ENCODE measurements at regions of chr16 and their contacts with region 1.

Region 1: GRCh38 chr16:75622761-75623605 is at the start of gene ADAT1:
- DNase-seq: peak; percentile 95 to 99
- ATAC-seq: peak; percentile 95 to 98 (median 95)
- H3K4me3 ChIP-seq: peak within 1 kb of the TSS; percentile 90
- H3K4me3 Mint-ChIP-seq: peak within 1 kb of the TSS; percentile 91
- H3K27ac ChIP-seq: peak within 1 kb of the TSS; percentile 93
- H3K27ac Mint-ChIP-seq: peak within 1 kb of the TSS; percentile 93 to 98
- H3K4me1 ChIP-seq: peaks cover 35% of the 10 kb centered on the region
- H3K4me1 Mint-ChIP-seq: peaks cover 41 to 42% of the 10 kb centered on the region in 2 donors
- H3K27me3 ChIP-seq: no peaks in the 10 kb centered on the region
- H3K27me3 Mint-ChIP-seq: no peaks in the 10 kb centered on the region
- CTCF ChIP-seq: no peak
- total RNA-seq, gene ADAT1: 63.5 to 65.2 (median 64.8) TPM

Region 2: GRCh38 chr16:75432828-75433731 is 189.9 kb before region 1 on chr16 and contains the start of gene CFDP1:
- intact Hi-C with region 1: loop called (anchors 1 kb)
- DNase-seq: peak; percentile 93 to 98
- ATAC-seq: peak; percentile 83 to 93 (median 87)
- H3K4me3 ChIP-seq: peak within 1 kb of the TSS; percentile 86
- H3K4me3 Mint-ChIP-seq: peak within 1 kb of the TSS; percentile 96
- H3K27ac ChIP-seq: peak within 1 kb of the TSS; percentile 94
- H3K27ac Mint-ChIP-seq: peak within 1 kb of the TSS; percentile 96 to 99
- H3K4me1 ChIP-seq: peaks cover 19% of the 10 kb centered on the region
- H3K4me1 Mint-ChIP-seq: peaks cover 22 to 26% of the 10 kb centered on the region in 2 donors
- H3K27me3 ChIP-seq: no peaks in the 10 kb centered on the region
- H3K27me3 Mint-ChIP-seq: no peaks in the 10 kb centered on the region
- CTCF ChIP-seq: no peak
- total RNA-seq, gene CFDP1: 32.2 to 38.8 (median 32.3) TPM

Region 3: GRCh38 chr16:75464130-75464918 is 158.7 kb before region 1 on chr16 and contains the start of gene TMEM170A:
- intact Hi-C with region 1: loop called (anchors 5 kb)
- DNase-seq: peak; percentile 98 to 99
- ATAC-seq: peak; percentile 89 to 97 (median 91)
- H3K4me3 ChIP-seq: peak within 1 kb of the TSS; percentile 82
- H3K4me3 Mint-ChIP-seq: peak within 1 kb of the TSS; percentile 97
- H3K27ac ChIP-seq: peak within 1 kb of the TSS; percentile 99
- H3K27ac Mint-ChIP-seq: peak within 1 kb of the TSS; percentile 95 to 97
- H3K4me1 ChIP-seq: peaks cover 13% of the 10 kb centered on the region
- H3K4me1 Mint-ChIP-seq: peaks cover 46 to 52% of the 10 kb centered on the region in 2 donors
- H3K27me3 ChIP-seq: no peaks in the 10 kb centered on the region
- H3K27me3 Mint-ChIP-seq: no peaks in the 10 kb centered on the region
- CTCF ChIP-seq: no peak
- total RNA-seq, gene TMEM170A: 51.5 to 61.0 (median 53.9) TPM

Region 4: GRCh38 chr16:75566040-75566810 is 56.8 kb before region 1 on chr16 and contains the start of gene GABARAPL2:
- intact Hi-C with region 1: loop called (anchors 1 kb)
- DNase-seq: peak; percentile 94 to 95
- ATAC-seq: peak; percentile 78 to 93 (median 85)
- H3K4me3 ChIP-seq: peak within 1 kb of the TSS; percentile 59
- H3K4me3 Mint-ChIP-seq: peak within 1 kb of the TSS; percentile 90
- H3K27ac ChIP-seq: peak within 1 kb of the TSS; percentile 76
- H3K27ac Mint-ChIP-seq: peak within 1 kb of the TSS; percentile 86 to 93
- H3K4me1 ChIP-seq: peaks cover 30% of the 10 kb centered on the region
- H3K4me1 Mint-ChIP-seq: peaks cover 20 to 26% of the 10 kb centered on the region in 2 donors
- H3K27me3 ChIP-seq: peaks cover 2% of the 10 kb centered on the region
- H3K27me3 Mint-ChIP-seq: peaks cover 16 to 19% of the 10 kb centered on the region in 2 donors
- CTCF ChIP-seq: no peak
- total RNA-seq, gene GABARAPL2: 66.2 to 74.0 (median 71.3) TPM

Region 5: DNA sequence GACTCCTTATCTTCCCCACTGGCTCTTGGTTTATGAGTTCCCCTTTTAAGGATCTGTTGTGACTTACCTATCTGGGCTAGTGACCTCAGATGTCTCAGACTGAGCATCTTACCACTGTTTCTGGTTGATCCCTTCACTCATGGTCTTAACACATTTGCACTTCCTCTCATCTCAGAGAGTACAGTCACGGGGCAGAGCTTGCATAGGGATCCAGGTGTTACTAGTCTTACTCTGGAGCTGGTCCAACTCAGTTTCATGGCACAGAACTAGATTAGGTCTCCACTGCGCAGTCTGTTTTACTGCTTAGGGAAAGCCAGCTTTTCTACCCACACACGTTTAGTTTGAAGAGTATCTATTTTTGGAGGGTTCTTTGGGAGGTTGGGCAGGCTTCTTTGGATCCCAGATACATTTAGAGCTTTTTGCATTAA is 46.6 kb before region 1 on chr16:
- intact Hi-C with region 1: no loop called
- DNase-seq: no peak
- ATAC-seq: no peak
- H3K4me3 ChIP-seq: no peak overlapping the region
- H3K4me3 Mint-ChIP-seq: no peak overlapping the region
- H3K27ac ChIP-seq: no peak overlapping the region
- H3K27ac Mint-ChIP-seq: peak overlapping the region in 1 of 2 donors; percentile 47
- H3K4me1 ChIP-seq: peaks cover 14% of the 10 kb centered on the region
- H3K4me1 Mint-ChIP-seq: peaks cover 11 to 29% of the 10 kb centered on the region in 2 donors
- H3K27me3 ChIP-seq: no peaks in the 10 kb centered on the region
- H3K27me3 Mint-ChIP-seq: no peaks in the 10 kb centered on the region
- CTCF ChIP-seq: no peak